ENCODE measurements at regions of chr7 and their contacts with region 1.

Region 1: GRCh38 chr7:24819916-24820689 is 62.8 kb upstream of the GSDME start:
- DNase-seq: no peak
- ATAC-seq: peak; percentile 84
- H3K4me3 ChIP-seq: no peak overlapping the region
- H3K27ac ChIP-seq: peak overlapping the region; percentile 81
- H3K4me1 ChIP-seq: peaks cover 21% of the 10 kb centered on the region
- H3K27me3 ChIP-seq: no peaks in the 10 kb centered on the region
- CTCF ChIP-seq: peak; percentile 82 to 95 (median 87)
- EP300 ChIP-seq: peak in 1 of 2 experiments; percentile 33; a peak in 1 of 4 replicates
- POLR2A ChIP-seq: no peak
- RAD21 ChIP-seq: peak; percentile 99

Region 2: DNA sequence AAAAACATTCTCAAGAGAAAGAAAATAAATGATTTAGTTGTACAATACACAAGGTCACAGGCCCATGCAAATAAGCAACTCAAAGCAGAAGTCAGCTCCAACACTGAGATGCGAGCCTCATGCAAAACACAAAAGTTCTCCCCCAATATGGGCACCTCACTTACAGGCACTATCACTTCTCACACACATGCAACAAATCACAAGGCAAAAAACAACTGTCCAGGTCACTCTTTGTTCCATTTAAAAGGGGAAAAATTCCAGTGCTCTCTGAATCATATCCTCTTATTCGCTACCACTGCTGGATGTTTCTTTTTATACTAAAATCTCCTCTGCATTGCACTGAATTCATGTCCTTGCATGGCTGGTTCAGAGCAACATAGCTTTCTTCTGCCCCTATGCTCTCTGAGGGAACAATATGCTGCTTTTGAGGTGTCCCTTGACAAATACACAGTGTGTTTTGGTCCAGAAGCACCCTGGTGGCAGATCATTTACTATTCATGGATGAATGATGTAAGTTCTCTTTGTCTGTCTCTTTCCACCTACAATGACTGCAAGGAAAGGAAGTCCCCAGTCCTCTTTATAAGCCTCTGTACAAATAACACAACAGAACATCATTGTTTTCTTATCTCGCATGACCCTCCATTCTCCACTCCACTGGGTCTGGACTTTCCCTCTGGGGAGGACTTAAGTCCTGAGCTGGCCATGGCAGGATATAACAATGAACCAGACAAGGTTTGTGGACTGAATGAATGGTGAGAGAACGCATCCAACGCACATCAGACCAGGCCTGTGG is 22.5 kb after region 1 on chr7:
- CTCF ChIA-PET with region 1: interaction called, 48 read pairs
- POLR2A ChIA-PET with region 1: interaction called, 5 read pairs
- RAD21 ChIA-PET with region 1: interaction called, 24 read pairs
- SMC1A ChIA-PET with region 1: interaction called, 103 read pairs
- in situ Hi-C with region 1: no loop called
- intact Hi-C with region 1: loop called (anchors 1 kb)
- DNase-seq: no peak
- ATAC-seq: peak; percentile 86
- H3K4me3 ChIP-seq: no peak overlapping the region
- H3K27ac ChIP-seq: peak overlapping the region; percentile 64; the same call in 1 of the 2 replicates
- H3K4me1 ChIP-seq: peaks cover 20% of the 10 kb centered on the region
- H3K27me3 ChIP-seq: no peaks in the 10 kb centered on the region
- CTCF ChIP-seq: no peak
- EP300 ChIP-seq: peak; percentile 37 to 72; a peak in 2 of 4 replicates
- POLR2A ChIP-seq: no peak
- RAD21 ChIP-seq: no peak

Region 3: GRCh38 chr7:24889611-24890010 is 69.5 kb after region 1 on chr7:
- CTCF ChIA-PET with region 1: interaction called, 7 read pairs
- POLR2A ChIA-PET with region 1: no interaction called
- RAD21 ChIA-PET with region 1: interaction called, 14 read pairs
- SMC1A ChIA-PET with region 1: interaction called, 15 read pairs
- in situ Hi-C with region 1: no loop called
- intact Hi-C with region 1: no loop called
- DNase-seq: no peak
- ATAC-seq: peak; percentile 56
- H3K4me3 ChIP-seq: no peak overlapping the region
- H3K27ac ChIP-seq: no peak overlapping the region
- H3K4me1 ChIP-seq: peaks cover 20% of the 10 kb centered on the region
- H3K27me3 ChIP-seq: no peaks in the 10 kb centered on the region
- CTCF ChIP-seq: no peak
- EP300 ChIP-seq: no peak
- POLR2A ChIP-seq: no peak
- RAD21 ChIP-seq: no peak

Region 4: DNA sequence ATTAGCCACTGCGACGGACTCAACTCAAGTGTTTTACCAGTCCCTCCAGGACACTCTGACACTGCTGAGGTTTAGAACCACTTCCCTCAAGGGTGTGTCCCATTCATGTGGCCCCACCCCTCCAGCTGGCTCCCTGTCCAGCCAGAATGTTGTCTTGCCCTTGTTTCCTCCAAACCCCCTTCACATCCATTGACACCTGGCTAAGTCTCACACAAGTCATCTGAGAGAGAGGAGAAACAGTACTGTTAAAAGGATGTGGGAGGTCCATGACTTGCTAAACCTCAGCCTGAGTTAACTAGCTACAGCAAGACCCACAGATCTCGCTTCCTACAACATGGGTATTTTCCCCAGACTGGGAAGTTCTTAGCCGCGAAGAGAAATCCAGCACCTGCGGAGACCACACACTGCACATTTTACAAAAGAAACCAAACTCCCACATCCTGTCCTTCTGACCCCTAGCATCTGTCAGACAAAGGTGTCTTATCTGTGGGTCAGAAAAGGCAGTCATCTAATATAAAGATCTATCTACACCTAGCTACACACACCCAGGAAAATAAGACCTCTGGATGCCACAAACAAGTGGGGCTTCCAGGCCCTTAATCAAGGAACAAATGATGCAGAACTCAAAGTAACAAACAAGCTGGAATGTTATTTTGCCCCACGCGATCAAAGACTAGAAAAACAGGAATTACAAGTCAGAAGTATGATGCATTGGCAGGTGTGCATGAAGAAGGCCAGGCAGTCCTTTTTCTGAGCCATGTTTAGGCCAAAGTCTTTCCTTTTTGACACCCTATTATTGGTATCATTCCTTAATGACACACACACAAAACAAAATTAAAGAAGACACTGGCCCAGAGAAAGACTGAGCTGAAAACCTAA is 146.0 kb after region 1 on chr7:
- CTCF ChIA-PET with region 1: interaction called, 16 read pairs
- POLR2A ChIA-PET with region 1: interaction called, 13 read pairs
- RAD21 ChIA-PET with region 1: interaction called, 22 read pairs
- SMC1A ChIA-PET with region 1: interaction called, 30 read pairs
- in situ Hi-C with region 1: no loop called
- intact Hi-C with region 1: loop called (anchors 1 kb)
- DNase-seq: peak; percentile 98
- ATAC-seq: peak; percentile 78
- H3K4me3 ChIP-seq: peak overlapping the region; percentile 44; the same call in 1 of the 2 replicates
- H3K27ac ChIP-seq: peak overlapping the region; percentile 82
- H3K4me1 ChIP-seq: peaks cover 65% of the 10 kb centered on the region
- H3K27me3 ChIP-seq: no peaks in the 10 kb centered on the region
- CTCF ChIP-seq: no peak
- EP300 ChIP-seq: peak; percentile 93 to 97
- POLR2A ChIP-seq: no peak; the same call in 1 of the 2 replicates
- RAD21 ChIP-seq: 0 out of 2 replicates have a peak, but pooled peaks have one; percentile 15

Region 5: DNA sequence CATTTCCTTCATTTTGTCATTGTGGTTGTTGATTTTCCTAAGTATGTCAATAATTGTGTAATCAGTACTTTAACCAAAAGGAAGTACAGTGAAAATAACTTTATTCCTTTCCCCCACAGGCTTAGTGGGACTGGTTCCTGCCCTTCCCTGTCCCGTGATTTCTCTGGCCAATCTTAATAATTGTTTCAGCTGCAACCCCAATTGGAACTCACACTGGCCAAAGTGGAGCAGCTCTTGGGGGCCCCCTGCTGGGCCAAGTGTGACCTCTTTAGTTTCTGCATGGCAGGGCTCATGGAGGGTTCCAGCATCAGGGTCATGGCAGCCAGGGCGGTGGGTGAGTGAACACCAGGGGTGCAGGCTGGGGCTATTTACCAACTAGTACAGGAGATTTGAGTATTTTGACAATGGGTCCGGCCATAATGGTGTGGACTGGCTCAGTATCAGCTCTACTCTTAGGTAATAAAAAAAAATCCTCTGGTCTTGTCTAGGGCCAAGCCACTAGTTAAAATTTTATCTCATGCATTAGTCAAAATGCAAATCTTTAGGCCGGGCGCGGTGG is 273.2 kb after region 1 on chr7:
- CTCF ChIA-PET with region 1: interaction called, 290 read pairs
- POLR2A ChIA-PET with region 1: interaction called, 3 read pairs
- RAD21 ChIA-PET with region 1: interaction called, 120 read pairs
- SMC1A ChIA-PET with region 1: interaction called, 160 read pairs
- in situ Hi-C with region 1: loop called (anchors 5 kb)
- intact Hi-C with region 1: loop called (anchors 1 kb)
- DNase-seq: no peak
- ATAC-seq: peak; percentile 96
- H3K4me3 ChIP-seq: no peak overlapping the region
- H3K27ac ChIP-seq: no peak overlapping the region
- H3K4me1 ChIP-seq: peaks cover 4% of the 10 kb centered on the region
- H3K27me3 ChIP-seq: no peaks in the 10 kb centered on the region
- CTCF ChIP-seq: peak; percentile 84 to 90 (median 89)
- EP300 ChIP-seq: no peak
- POLR2A ChIP-seq: no peak
- RAD21 ChIP-seq: peak; percentile 90